ENCODE measurements at regions of chr22 and their contacts with region 1.

Region 1: DNA sequence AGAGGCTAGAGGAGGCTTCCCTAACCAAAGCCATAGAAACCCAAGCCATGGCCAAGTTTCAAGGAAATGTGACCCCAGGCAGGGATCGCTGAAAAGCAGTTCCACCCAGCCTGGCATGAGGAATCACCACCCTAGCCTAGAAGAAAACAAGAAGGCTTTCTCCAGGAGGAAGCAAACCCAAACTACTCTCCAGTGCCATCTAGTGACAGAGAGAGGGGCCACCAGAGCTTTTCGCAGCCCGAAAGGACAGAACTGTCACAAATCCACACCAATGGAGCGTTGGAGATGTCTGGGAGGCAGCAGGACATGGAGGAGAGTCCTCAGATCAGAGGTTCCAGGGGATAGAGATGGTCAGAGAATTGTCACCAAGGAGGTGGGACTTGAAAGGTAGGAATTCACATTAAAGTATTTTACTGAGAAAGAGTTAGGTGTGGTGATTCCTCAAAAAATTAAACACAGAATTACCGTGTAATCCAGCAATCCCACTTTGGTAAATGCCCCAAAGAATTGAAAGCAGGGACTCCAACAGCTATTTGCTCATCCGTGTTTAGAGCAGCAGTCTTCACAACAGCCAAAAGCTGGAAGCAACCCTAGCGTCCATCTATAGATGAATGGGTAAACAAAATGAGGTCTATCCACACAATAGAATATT is 67.3 kb upstream of the NUP50 start:
- DNase-seq: peak; percentile 70
- H3K4me3 Mint-ChIP-seq: no peak overlapping the region
- H3K27ac Mint-ChIP-seq: no peak overlapping the region
- H3K4me1 Mint-ChIP-seq: peaks cover 4% of the 10 kb centered on the region
- H3K27me3 Mint-ChIP-seq: peaks cover 20% of the 10 kb centered on the region

Region 2: DNA sequence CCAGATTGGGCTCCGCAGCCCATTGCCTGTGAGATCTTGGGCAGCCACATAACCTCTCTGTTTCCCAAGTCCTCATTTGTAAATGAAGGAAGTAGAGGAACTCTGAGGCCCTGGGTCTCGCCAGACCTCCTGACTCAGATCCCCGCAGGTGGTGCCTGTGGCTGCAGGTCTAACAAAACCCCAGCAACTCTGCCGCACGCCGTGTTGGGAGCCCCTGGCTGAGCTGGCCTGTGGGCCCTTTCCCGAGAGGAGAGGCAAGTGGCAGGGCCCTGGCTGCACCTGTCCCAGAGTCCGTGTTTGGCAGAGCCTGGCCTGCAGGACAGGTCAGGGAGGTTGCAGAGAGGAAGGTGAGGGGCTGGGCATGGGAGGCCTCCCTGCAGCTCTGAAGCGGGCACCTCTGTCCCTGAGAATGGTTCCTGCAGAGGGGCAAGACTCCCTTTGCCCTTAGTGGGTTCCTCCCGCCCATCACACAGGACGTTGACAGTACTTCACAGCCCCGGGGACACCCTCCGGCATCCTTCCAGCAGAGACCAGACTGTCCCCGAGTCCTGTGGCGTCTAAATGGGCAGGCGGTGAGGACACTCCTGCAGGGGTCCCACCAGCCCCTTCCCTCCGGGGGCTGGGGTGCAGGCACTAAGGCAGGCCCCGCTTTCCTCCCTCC is 276.3 kb before region 1 on chr22:
- CTCF ChIA-PET with region 1: interaction called, 13 read pairs
- POLR2A ChIA-PET with region 1: no interaction called
- intact Hi-C with region 1: no loop called
- DNase-seq: no peak
- H3K4me3 Mint-ChIP-seq: no peak overlapping the region
- H3K27ac Mint-ChIP-seq: no peak overlapping the region
- H3K4me1 Mint-ChIP-seq: no peaks in the 10 kb centered on the region
- H3K27me3 Mint-ChIP-seq: no peaks in the 10 kb centered on the region

Region 3: GRCh38 chr22:44975427-44976262 is 120.7 kb before region 1 on chr22:
- CTCF ChIA-PET with region 1: interaction called, 3 read pairs
- POLR2A ChIA-PET with region 1: no interaction called
- intact Hi-C with region 1: loop called (anchors 2 kb)
- DNase-seq: peak; percentile 87
- H3K4me3 Mint-ChIP-seq: no peak overlapping the region
- H3K27ac Mint-ChIP-seq: no peak overlapping the region
- H3K4me1 Mint-ChIP-seq: no peaks in the 10 kb centered on the region
- H3K27me3 Mint-ChIP-seq: peaks cover 12% of the 10 kb centered on the region

Region 4: DNA sequence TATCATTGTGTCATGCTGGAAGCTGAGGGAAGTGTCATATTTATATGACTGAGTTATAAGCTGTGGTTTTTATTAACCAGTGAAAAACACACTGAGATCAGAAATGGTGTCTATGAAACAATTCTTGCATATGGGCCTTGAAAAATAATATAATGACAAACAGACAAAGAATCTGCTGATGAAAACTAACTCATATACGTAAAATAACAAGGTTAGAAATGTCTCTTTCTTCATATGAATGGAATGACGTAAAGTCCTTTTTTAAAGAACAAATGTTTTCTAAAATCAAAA is 37.8 kb before region 1 on chr22:
- CTCF ChIA-PET with region 1: no interaction called
- POLR2A ChIA-PET with region 1: no interaction called
- intact Hi-C with region 1: no loop called
- DNase-seq: no peak
- H3K4me3 Mint-ChIP-seq: no peak overlapping the region
- H3K27ac Mint-ChIP-seq: no peak overlapping the region
- H3K4me1 Mint-ChIP-seq: peaks cover 7% of the 10 kb centered on the region
- H3K27me3 Mint-ChIP-seq: peaks cover 15% of the 10 kb centered on the region

Region 5: GRCh38 chr22:45082795-45083194 is 13.6 kb before region 1 on chr22:
- CTCF ChIA-PET with region 1: interaction called, 13 read pairs
- POLR2A ChIA-PET with region 1: no interaction called
- intact Hi-C with region 1: no loop called
- DNase-seq: peak; percentile 45
- H3K4me3 Mint-ChIP-seq: no peak overlapping the region
- H3K27ac Mint-ChIP-seq: no peak overlapping the region
- H3K4me1 Mint-ChIP-seq: peaks cover 14% of the 10 kb centered on the region
- H3K27me3 Mint-ChIP-seq: peaks cover 37% of the 10 kb centered on the region

Measured in activated CD4-positive, alpha-beta memory T cell treated with anti-CD3 and anti-CD28 coated beads for 36 hours (primary cell).